ENCODE measurements at regions of chr12 and their contacts with region 1.

Region 1: GRCh38 chr12:15856097-15856982 is 25.8 kb upstream of the STRAP start:
- DNase-seq: peak; percentile 41
- H3K4me3 ChIP-seq: no peak overlapping the region
- H3K27ac ChIP-seq: no peak overlapping the region
- H3K4me1 ChIP-seq: peaks cover 10% of the 10 kb centered on the region
- H3K27me3 ChIP-seq: no peaks in the 10 kb centered on the region
- CTCF ChIP-seq: peak; percentile 71 to 73

Region 2: GRCh38 chr12:15268927-15269552 is 587.3 kb before region 1 on chr12:
- CTCF ChIA-PET with region 1: no interaction called
- dilution Hi-C with region 1: no loop called
- in situ Hi-C with region 1: loop called in 1 of 2 experiments (anchors 25 kb)
- intact Hi-C with region 1: no loop called
- DNase-seq: peak; percentile 50
- H3K4me3 ChIP-seq: no peak overlapping the region
- H3K27ac ChIP-seq: no peak overlapping the region
- H3K4me1 ChIP-seq: peaks cover 5% of the 10 kb centered on the region
- H3K27me3 ChIP-seq: no peaks in the 10 kb centered on the region
- CTCF ChIP-seq: peak; percentile 83 to 89

Region 3: DNA sequence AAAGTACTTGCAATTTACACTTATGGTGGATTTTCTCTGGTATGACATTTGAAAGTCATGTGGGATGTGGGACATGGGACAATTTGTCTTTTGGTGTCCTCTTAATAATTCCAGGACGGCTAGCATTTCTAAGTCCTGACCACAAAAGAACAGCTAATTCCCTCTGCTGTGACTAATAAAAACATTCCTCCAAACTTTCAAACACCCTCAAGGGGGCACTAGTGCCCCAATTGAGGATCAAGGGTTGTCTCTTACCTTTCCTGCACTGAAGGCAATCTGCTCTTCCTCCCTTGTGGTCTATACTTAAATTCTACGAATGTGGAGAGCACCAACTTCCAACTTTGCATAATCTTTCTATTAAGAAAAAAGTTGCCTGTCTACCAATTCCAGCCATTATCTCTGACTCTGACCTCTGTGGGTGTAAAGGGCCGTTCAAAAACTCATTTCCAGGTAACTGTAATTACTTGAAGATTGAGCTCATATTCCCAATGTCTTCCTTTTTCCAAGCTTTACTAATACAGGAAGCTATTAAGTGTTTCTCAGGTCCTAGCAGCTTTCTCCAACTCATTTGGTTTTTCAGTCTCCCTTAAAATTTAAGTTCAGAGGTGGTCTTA is 323.9 kb before region 1 on chr12:
- CTCF ChIA-PET with region 1: interaction called, 3 read pairs
- dilution Hi-C with region 1: no loop called
- in situ Hi-C with region 1: loop called (anchors 5 to 10 kb)
- intact Hi-C with region 1: loop called (anchors 1 kb)
- DNase-seq: peak; percentile 70
- H3K4me3 ChIP-seq: no peak overlapping the region
- H3K27ac ChIP-seq: no peak overlapping the region
- H3K4me1 ChIP-seq: peaks cover 7% of the 10 kb centered on the region
- H3K27me3 ChIP-seq: no peaks in the 10 kb centered on the region
- CTCF ChIP-seq: peak; percentile 40 to 71

Region 4: GRCh38 chr12:15590180-15590826 is 266.0 kb before region 1 on chr12:
- CTCF ChIA-PET with region 1: no interaction called
- dilution Hi-C with region 1: no loop called
- in situ Hi-C with region 1: loop called (anchors 5 to 10 kb)
- intact Hi-C with region 1: loop called (anchors 1 kb)
- DNase-seq: peak; percentile 73
- H3K4me3 ChIP-seq: peak overlapping the region; percentile 51 to 54 (median 52)
- H3K27ac ChIP-seq: peak overlapping the region; percentile 6
- H3K4me1 ChIP-seq: peaks cover 5% of the 10 kb centered on the region
- H3K27me3 ChIP-seq: no peaks in the 10 kb centered on the region
- CTCF ChIP-seq: peak; percentile 78 to 90

Region 5: GRCh38 chr12:15789220-15790171 is 66.8 kb before region 1 on chr12 and contains the start of gene EPS8:
- CTCF ChIA-PET with region 1: no interaction called
- dilution Hi-C with region 1: no loop called
- in situ Hi-C with region 1: no loop called
- intact Hi-C with region 1: loop called (anchors 1 kb)
- DNase-seq: peak; percentile 91
- H3K4me3 ChIP-seq: peak within 1 kb of the TSS; percentile 79 to 92 (median 90)
- H3K27ac ChIP-seq: peak within 1 kb of the TSS; percentile 67
- H3K4me1 ChIP-seq: peaks cover 14% of the 10 kb centered on the region
- H3K27me3 ChIP-seq: no peaks in the 10 kb centered on the region
- CTCF ChIP-seq: peak in 1 of 2 donors; percentile 21
- total RNA-seq, gene EPS8: 28.9 to 51.7 TPM

Region 6: DNA sequence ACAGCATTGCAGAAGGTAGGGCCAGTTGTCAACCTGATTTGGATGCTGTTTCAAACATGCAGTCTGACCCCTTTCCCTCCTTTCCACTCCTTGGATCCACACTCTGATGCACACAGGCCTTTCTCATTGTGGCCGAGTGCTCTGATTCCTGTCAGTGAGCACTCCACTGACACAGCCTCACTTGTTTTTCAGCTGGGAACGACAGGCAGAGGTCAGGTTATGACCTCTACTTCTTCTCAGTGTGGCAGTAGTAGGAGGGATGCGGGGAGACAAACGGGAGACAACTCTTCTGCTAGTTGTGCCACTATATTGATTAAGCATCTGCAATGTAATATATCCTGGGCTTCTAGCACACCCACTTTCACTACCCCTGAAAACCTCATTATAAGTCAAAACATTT is 116.6 kb after region 1 on chr12:
- CTCF ChIA-PET with region 1: no interaction called
- dilution Hi-C with region 1: no loop called
- in situ Hi-C with region 1: no loop called
- intact Hi-C with region 1: no loop called
- DNase-seq: no peak
- H3K4me3 ChIP-seq: no peak overlapping the region
- H3K27ac ChIP-seq: no peak overlapping the region
- H3K4me1 ChIP-seq: no peaks in the 10 kb centered on the region
- H3K27me3 ChIP-seq: no peaks in the 10 kb centered on the region
- CTCF ChIP-seq: no peak